Activated CD4-positive, alpha-beta T cell treated with anti-CD3 and anti-CD28 coated beads for 36 hours (primary cell): ENCODE measurements at regions of chrX and their contacts with region 1.

Region 1: GRCh38 chrX:119729408-119730201 is 28.8 kb upstream of the SOWAHD start:
- DNase-seq: peak; percentile 74
- ATAC-seq: peak; percentile 60
- H3K4me3 Mint-ChIP-seq: no peak overlapping the region
- H3K27ac Mint-ChIP-seq: no peak overlapping the region
- H3K4me1 Mint-ChIP-seq: peaks cover 6% of the 10 kb centered on the region
- H3K27me3 Mint-ChIP-seq: no peaks in the 10 kb centered on the region

Region 2: GRCh38 chrX:119093991-119094737 is 635.4 kb before region 1 on chrX:
- CTCF ChIA-PET with region 1: no interaction called
- POLR2A ChIA-PET with region 1: no interaction called
- intact Hi-C with region 1: no loop called
- DNase-seq: no peak
- ATAC-seq: no peak
- H3K4me3 Mint-ChIP-seq: no peak overlapping the region
- H3K27ac Mint-ChIP-seq: no peak overlapping the region
- H3K4me1 Mint-ChIP-seq: no peaks in the 10 kb centered on the region
- H3K27me3 Mint-ChIP-seq: peaks cover 4% of the 10 kb centered on the region

Region 3: DNA sequence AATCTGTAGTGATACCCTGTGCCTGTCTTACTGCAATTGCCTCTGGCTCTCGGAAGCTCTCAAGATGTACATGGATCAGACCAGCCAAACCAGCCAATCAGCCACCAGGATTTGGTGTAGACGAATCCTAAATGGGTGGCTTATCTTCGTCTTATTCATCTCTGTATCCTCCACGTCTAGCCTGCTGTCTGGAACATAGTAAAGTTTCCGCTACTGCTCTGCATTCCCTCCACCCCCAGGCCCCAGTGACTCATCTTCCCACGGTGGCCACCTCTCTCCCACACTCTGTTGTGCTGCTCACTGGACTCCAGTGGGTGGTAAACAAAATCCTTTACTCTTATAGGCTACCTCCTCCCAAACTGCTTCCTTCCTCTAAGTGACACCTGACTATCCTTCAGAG is 74.5 kb before region 1 on chrX:
- CTCF ChIA-PET with region 1: interaction called, 10 read pairs
- POLR2A ChIA-PET with region 1: no interaction called
- intact Hi-C with region 1: no loop called
- DNase-seq: peak; percentile 83
- ATAC-seq: peak; percentile 86
- H3K4me3 Mint-ChIP-seq: peak overlapping the region; percentile 55
- H3K27ac Mint-ChIP-seq: peak overlapping the region; percentile 92
- H3K4me1 Mint-ChIP-seq: peaks cover 39% of the 10 kb centered on the region
- H3K27me3 Mint-ChIP-seq: no peaks in the 10 kb centered on the region

Region 4: GRCh38 chrX:119698845-119699244 is 30.8 kb before region 1 on chrX:
- CTCF ChIA-PET with region 1: interaction called, 9 read pairs
- POLR2A ChIA-PET with region 1: no interaction called
- intact Hi-C with region 1: loop called (anchors 2 kb)
- DNase-seq: no peak
- ATAC-seq: peak; percentile 64
- H3K4me3 Mint-ChIP-seq: no peak overlapping the region
- H3K27ac Mint-ChIP-seq: no peak overlapping the region
- H3K4me1 Mint-ChIP-seq: no peaks in the 10 kb centered on the region
- H3K27me3 Mint-ChIP-seq: no peaks in the 10 kb centered on the region